ENCODE measurements at regions of chr6 and their contacts with region 1.

Region 1: GRCh38 chr6:31739639-31740396 is at the start of gene MSH5:
- DNase-seq: peak; percentile 99
- H3K4me3 ChIP-seq: peak within 1 kb of the TSS; percentile 19 to 48 (median 33)
- H3K27ac ChIP-seq: peak within 1 kb of the TSS in 1 of 3 donors; percentile 11
- H3K4me1 ChIP-seq: peaks cover 18 to 29% of the 10 kb centered on the region in 2 donors
- H3K27me3 ChIP-seq: no peaks in the 10 kb centered on the region
- CTCF ChIP-seq: no peak
- POLR2A ChIP-seq: peak in 1 of 2 donors; percentile 74
- total RNA-seq, gene MSH5: 5.6 to 11.2 (median 7.2) TPM

Region 2: DNA sequence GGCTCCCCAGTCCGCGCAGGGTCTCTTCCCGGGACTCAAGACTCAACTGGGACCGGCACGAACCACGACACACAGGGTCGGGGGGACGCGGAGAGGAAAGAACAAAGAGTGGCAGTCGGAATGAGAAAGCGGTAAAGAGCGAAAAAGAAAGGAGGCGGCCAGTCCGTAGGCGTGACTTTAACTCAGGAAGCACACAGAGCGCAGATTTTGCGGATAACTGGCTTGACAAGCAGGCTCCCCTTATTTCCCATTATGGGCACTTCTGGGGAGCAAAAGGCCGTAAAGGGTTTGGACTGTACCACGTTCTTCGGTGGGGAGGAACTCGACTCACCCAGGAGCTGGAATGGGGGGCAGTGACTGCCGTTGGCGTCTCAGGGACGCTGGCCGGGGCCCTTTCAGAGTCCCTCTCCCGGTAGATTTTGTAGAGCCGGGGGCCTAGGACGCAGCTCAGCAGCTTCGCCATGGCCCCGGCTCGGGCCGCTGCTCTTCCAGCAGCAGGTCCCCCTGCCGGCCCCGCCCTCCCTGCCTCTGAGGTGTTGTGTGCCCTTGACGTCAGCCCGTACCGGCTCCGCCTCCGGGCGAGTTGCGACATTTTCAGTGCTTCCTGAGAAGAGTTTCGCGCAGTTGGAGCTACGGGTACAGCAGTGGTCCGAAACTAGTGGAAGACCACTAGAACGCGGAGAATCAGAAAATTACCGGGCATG is 36.8 kb before region 1 on chr6 and contains the start of gene ABHD16A:
- intact Hi-C with region 1: loop called (anchors 5 kb)
- DNase-seq: peak; percentile 100
- H3K4me3 ChIP-seq: peak within 1 kb of the TSS; percentile 33 to 90 (median 75)
- H3K27ac ChIP-seq: peak within 1 kb of the TSS; percentile 95 to 99 (median 96)
- H3K4me1 ChIP-seq: peaks cover 20 to 21% of the 10 kb centered on the region in 2 donors
- H3K27me3 ChIP-seq: no peaks in the 10 kb centered on the region
- CTCF ChIP-seq: no peak
- POLR2A ChIP-seq: peak; percentile 82 to 97
- total RNA-seq, gene ABHD16A: 47.3 to 81.4 (median 71.7) TPM

Measured in thyroid gland (tissue), 4 donors.